Natural killer cell (primary cell): ENCODE measurements at regions of chr19 and their contacts with region 1.

Region 1: GRCh38 chr19:892243-893050 is 540 bp downstream of the MED16 start:
- DNase-seq: peak in 1 of 2 donors; percentile 26
- ATAC-seq: peak; percentile 54 to 68 (median 67)
- H3K4me3 ChIP-seq: peak overlapping the region; percentile 61
- H3K4me3 Mint-ChIP-seq: peak overlapping the region; percentile 97
- H3K27ac ChIP-seq: peak overlapping the region; percentile 98
- H3K27ac Mint-ChIP-seq: peak overlapping the region; percentile 99
- H3K4me1 ChIP-seq: peaks cover 46% of the 10 kb centered on the region
- H3K4me1 Mint-ChIP-seq: peaks cover 9 to 30% of the 10 kb centered on the region in 2 donors
- H3K27me3 ChIP-seq: no peaks in the 10 kb centered on the region
- H3K27me3 Mint-ChIP-seq: no peaks in the 10 kb centered on the region
- CTCF ChIP-seq: no peak

Region 2: DNA sequence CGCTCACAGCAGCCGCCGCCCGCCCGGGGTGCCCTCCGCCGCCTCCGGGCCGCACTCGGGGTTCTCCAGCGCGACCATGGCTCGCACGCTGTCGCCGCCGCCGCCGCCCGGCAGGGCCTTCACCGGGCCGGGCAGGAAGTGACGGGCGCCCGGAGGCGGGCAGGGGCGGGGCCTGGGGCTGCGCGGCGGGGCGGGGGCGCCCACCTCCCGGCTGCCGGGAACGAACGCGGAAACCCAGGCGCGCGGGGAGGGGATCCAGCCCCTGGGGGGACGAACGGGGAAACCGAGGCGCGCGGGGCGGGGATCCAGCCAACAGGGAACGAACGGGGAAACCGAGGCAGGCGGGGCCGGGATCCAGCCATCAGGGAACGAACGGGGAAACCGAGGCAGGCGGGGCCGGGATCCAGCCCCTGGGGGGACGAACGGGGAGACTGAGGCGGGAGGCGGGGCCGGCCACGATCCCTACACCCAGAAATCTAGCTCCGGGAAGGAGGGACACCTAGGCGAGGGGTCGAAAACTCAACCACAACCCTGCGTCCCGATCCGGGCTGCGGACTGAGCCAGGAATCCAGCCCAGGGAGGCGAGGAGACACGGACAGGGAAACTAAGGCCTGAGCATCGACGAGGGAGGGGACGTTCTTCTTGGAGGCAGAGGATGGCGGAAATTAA is 20.8 kb after region 1 on chr19 and contains the start of gene R3HDM4:
- intact Hi-C with region 1: loop called (anchors 1 kb)
- DNase-seq: peak; percentile 83 to 90
- ATAC-seq: peak; percentile 75 to 88 (median 85)
- H3K4me3 ChIP-seq: peak within 1 kb of the TSS; percentile 92
- H3K4me3 Mint-ChIP-seq: peak within 1 kb of the TSS; percentile 86
- H3K27ac ChIP-seq: peak within 1 kb of the TSS; percentile 98
- H3K27ac Mint-ChIP-seq: peak within 1 kb of the TSS; percentile 64 to 83
- H3K4me1 ChIP-seq: peaks cover 54% of the 10 kb centered on the region
- H3K4me1 Mint-ChIP-seq: peaks cover 12 to 17% of the 10 kb centered on the region in 2 donors
- H3K27me3 ChIP-seq: peaks cover 13% of the 10 kb centered on the region
- H3K27me3 Mint-ChIP-seq: peaks cover 0 to 8% of the 10 kb centered on the region in 2 donors
- CTCF ChIP-seq: no peak
- total RNA-seq, gene R3HDM4: 88.7 to 106 (median 97.8) TPM